ENCODE measurements at regions of chr17 and their contacts with region 1.

Region 1: GRCh38 chr17:36601303-36602029 is at the start of gene MRM1:
- DNase-seq: peak; percentile 84
- ATAC-seq: peak; percentile 90
- H3K4me3 Mint-ChIP-seq: peak within 1 kb of the TSS; percentile 90
- H3K27ac Mint-ChIP-seq: peak within 1 kb of the TSS; percentile 88
- H3K4me1 Mint-ChIP-seq: peaks cover 35% of the 10 kb centered on the region
- H3K27me3 Mint-ChIP-seq: no peaks in the 10 kb centered on the region
- CTCF ChIP-seq: no peak
- total RNA-seq, gene MRM1: 14.3 and 15.6 TPM in 2 replicates

Region 2: DNA sequence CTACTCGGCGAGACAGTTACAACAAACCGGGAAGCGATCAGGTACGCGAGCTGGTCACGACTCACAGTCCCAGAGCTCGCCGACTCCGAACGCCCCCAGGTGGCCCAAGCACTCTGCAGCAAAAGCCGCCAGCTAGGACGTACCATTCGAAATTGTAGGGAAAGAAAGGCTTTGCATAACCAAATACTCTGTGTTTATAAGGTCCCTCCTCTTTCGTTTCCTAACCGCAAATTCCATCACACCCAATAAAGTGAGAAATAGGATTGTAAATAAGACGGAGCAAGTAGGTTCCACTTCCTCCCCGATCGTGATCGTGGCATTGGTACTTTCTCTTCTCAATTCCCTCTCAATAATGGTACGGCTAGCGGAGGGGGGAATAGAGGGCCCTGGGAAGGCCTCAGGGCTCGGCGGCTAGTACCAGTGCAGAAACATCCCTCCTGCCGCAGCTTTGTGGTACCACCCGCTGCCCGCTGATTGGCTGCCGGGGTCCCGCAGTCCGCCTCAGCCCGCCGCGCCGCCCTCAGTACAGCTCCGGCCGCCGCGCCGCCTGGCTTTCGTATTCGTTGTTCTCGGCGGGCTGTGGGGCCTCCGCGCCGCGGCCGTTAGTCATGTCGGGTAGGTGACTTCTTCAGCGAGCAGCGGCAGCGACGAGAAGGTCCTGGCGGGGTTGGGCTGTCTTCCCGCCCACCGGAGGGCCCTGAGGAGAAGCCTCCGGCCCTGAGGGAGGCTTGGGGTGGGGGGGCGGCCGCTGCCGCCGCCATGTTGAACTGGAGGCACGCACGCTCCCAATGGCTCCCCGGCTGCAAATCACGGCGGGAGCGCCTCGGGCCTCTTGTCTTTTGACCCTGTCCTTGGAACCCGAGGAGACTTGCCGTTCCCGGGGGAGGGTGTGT is 792.3 kb before region 1 on chr17 and contains the start of gene TAF15:
- CTCF ChIA-PET with region 1: no interaction called
- POLR2A ChIA-PET with region 1: interaction called, 10 read pairs
- intact Hi-C with region 1: loop called (anchors 2 kb)
- DNase-seq: peak; percentile 91
- ATAC-seq: peak; percentile 88
- H3K4me3 Mint-ChIP-seq: peak within 1 kb of the TSS; percentile 93
- H3K27ac Mint-ChIP-seq: peak within 1 kb of the TSS; percentile 100
- H3K4me1 Mint-ChIP-seq: peaks cover 55% of the 10 kb centered on the region
- H3K27me3 Mint-ChIP-seq: no peaks in the 10 kb centered on the region
- CTCF ChIP-seq: no peak
- total RNA-seq, gene TAF15: 224 and 243 TPM in 2 replicates

Region 3: GRCh38 chr17:36545465-36546417 is 55.7 kb before region 1 on chr17:
- CTCF ChIA-PET with region 1: interaction called, 6 read pairs
- POLR2A ChIA-PET with region 1: interaction called, 33 read pairs
- intact Hi-C with region 1: loop called (anchors 2 kb)
- DNase-seq: peak; percentile 94
- ATAC-seq: peak; percentile 67
- H3K4me3 Mint-ChIP-seq: peak overlapping the region; percentile 92
- H3K27ac Mint-ChIP-seq: peak overlapping the region; percentile 92
- H3K4me1 Mint-ChIP-seq: peaks cover 59% of the 10 kb centered on the region
- H3K27me3 Mint-ChIP-seq: no peaks in the 10 kb centered on the region
- CTCF ChIP-seq: no peak

Region 4: DNA sequence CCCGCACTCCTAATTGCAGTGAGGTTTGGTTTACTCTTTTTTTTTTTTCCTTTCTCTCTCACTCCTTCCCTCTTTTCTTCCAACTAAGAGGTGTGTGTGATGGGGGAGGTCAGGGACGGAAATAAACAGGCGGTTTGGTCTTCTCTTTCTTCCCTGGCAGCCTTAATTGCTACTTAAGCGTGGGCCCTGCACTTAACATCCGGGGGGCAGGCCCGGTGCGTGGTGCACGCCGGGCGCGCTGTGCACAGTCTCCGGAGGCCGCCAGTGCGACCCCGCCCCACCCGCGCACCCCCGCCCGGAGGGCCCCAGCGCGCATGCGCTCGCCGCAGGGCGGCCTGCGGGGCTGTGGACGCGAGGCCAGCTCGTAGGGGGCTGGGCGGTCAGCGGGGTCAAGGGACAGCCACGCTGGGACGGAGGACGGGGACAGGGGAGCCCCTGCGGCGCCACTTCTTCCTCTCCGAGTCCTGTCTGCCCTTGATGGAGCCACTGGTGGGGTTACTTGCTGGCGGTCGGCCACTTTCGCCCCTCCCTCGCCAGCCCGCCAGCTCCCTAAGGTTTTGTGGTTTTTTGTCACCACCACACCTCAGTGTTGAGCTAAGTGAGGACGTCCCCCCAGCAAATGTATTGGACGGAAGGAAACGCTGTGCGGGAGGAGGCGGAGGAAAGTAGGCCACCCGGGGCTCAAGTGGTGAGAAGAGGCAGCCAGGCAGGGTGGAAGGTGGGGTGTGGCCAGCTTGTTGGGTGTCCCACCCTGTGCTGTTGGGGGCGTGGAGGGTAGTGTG is 120.8 kb after region 1 on chr17:
- CTCF ChIA-PET with region 1: no interaction called
- POLR2A ChIA-PET with region 1: interaction called, 6 read pairs
- intact Hi-C with region 1: loop called (anchors 5 kb)
- DNase-seq: peak; percentile 82
- ATAC-seq: peak; percentile 94
- H3K4me3 Mint-ChIP-seq: peak overlapping the region; percentile 85
- H3K27ac Mint-ChIP-seq: peak overlapping the region; percentile 90
- H3K4me1 Mint-ChIP-seq: peaks cover 54% of the 10 kb centered on the region
- H3K27me3 Mint-ChIP-seq: peaks cover 2% of the 10 kb centered on the region
- CTCF ChIP-seq: no peak

Region 5: GRCh38 chr17:36791150-36791941 is 189.9 kb after region 1 on chr17:
- CTCF ChIA-PET with region 1: no interaction called
- POLR2A ChIA-PET with region 1: no interaction called
- intact Hi-C with region 1: no loop called
- DNase-seq: no peak
- ATAC-seq: no peak
- H3K4me3 Mint-ChIP-seq: no peak overlapping the region
- H3K27ac Mint-ChIP-seq: no peak overlapping the region
- H3K4me1 Mint-ChIP-seq: no peaks in the 10 kb centered on the region
- H3K27me3 Mint-ChIP-seq: peaks cover 27% of the 10 kb centered on the region
- CTCF ChIP-seq: no peak

Region 6: DNA sequence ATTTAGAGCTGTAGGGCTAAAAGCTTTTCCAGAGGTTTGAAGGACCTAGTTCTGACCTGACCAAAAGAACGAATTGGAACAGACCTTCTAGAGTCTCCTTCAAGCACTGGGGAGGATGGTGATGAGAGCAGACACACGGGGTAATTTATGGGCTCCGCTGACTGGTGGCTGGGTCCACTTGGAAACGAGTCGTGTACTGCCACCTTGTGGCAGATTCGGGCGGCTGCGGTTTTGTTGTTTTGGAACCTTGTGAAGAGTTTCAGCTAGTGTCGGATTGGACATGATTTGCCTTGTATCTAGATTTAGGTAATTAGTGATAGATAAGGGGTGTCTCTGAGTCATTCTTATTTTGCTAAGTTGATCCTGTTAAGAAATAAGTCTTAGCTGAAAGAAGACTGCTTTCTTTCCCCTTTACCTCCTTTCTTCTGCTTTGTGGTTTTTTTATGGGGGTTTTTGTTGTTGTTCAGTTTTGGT is 446.2 kb after region 1 on chr17:
- CTCF ChIA-PET with region 1: interaction called, 65 read pairs
- POLR2A ChIA-PET with region 1: interaction called, 4 read pairs
- intact Hi-C with region 1: loop called (anchors 1 kb)
- DNase-seq: peak; percentile 54
- ATAC-seq: peak; percentile 66
- H3K4me3 Mint-ChIP-seq: no peak overlapping the region
- H3K27ac Mint-ChIP-seq: no peak overlapping the region
- H3K4me1 Mint-ChIP-seq: peaks cover 15% of the 10 kb centered on the region
- H3K27me3 Mint-ChIP-seq: no peaks in the 10 kb centered on the region
- CTCF ChIP-seq: peak; percentile 16

Region 7: GRCh38 chr17:37373530-37374159 is 772.2 kb after region 1 on chr17:
- CTCF ChIA-PET with region 1: interaction called, 9 read pairs
- POLR2A ChIA-PET with region 1: interaction called, 3 read pairs
- intact Hi-C with region 1: loop called (anchors 2 kb)
- DNase-seq: peak; percentile 22
- ATAC-seq: peak; percentile 92
- H3K4me3 Mint-ChIP-seq: no peak overlapping the region
- H3K27ac Mint-ChIP-seq: no peak overlapping the region
- H3K4me1 Mint-ChIP-seq: peaks cover 4% of the 10 kb centered on the region
- H3K27me3 Mint-ChIP-seq: no peaks in the 10 kb centered on the region
- CTCF ChIP-seq: no peak